Activated CD4-positive, alpha-beta T cell treated with anti-CD3 and anti-CD28 coated beads for 36 hours (primary cell): ENCODE measurements at regions of chr2 and their contacts with region 1.

Region 1: DNA sequence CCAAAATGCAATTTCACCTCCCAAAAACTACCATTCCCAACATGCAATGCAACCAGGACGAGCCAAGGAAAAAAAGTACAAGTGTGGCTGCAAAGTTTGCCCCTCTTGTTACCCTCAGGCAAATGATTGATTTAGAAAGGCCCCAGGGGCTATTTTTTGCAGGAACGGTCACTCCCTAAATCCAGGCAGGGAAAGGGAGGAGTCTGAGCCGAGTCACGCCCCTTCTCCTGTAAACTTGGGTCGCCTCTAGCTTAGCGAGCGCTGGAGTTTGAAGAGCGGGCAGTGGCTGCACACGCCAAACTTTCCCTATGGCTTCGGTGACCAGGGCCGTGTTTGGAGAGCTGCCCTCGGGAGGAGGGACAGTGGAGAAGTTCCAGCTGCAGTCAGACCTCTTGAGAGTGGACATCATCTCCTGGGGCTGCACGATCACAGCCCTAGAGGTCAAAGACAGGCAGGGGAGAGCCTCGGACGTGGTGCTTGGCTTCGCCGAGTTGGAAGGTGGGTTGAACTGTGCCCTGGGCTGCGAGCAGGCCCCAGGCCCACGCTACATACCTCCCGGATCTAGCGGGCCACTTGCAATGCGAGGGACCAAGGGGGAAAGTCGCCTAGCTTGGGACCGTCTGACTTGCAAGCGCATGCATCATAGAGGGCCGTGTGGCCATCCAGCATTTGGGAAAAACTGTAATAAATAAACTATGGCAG is at the start of gene GALM:
- DNase-seq: peak; percentile 77
- ATAC-seq: peak; percentile 32
- H3K4me3 Mint-ChIP-seq: peak within 1 kb of the TSS; percentile 89
- H3K27ac Mint-ChIP-seq: peak within 1 kb of the TSS; percentile 99
- H3K4me1 Mint-ChIP-seq: peaks cover 67% of the 10 kb centered on the region
- H3K27me3 Mint-ChIP-seq: no peaks in the 10 kb centered on the region
- total RNA-seq, gene GALM: 56.0 to 57.8 TPM

Region 2: DNA sequence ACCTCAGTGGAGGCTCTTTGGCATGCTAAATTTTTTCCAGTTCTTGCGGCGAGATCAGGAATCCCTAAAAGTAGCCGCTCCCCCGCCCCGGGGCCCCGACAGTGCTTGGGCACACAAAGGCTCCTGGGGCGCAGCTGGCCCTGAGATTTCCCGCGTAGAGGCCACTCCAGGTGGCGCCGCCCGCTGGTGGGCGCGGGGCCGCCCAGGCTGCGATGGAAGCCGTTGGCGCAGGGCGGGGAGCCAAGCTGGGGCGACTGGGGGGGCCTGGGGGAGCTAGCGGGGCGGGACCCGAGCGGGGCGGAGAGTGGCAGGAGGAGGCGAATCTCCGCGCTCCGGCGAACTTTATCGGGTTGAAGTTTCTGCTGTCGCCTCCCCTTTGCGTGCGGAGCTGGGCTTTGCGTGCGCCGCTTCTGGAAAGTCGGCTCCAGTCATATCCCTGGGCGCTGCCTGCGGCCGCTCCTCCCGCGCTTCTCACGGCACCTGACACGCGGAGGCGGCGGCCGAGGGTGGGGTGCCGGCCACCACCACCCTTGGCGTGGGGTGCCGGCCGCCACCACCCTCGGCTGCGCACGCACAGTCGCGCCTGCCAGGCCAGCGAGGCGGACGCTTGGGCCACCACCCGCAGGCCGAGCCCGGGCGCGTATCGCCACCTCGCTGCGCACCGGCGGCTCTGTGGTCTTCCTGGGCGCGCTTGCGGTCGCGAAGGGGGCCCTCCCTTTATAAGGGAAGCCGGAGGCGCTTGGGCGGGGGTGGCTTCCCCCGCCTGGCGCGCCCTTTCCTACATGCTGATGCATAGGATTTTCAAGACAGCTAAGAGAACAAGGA is 589.2 kb before region 1 on chr2:
- CTCF ChIA-PET with region 1: no interaction called
- POLR2A ChIA-PET with region 1: no interaction called
- intact Hi-C with region 1: no loop called
- DNase-seq: peak; percentile 90
- ATAC-seq: peak; percentile 75
- H3K4me3 Mint-ChIP-seq: peak overlapping the region; percentile 71
- H3K27ac Mint-ChIP-seq: peak overlapping the region; percentile 88
- H3K4me1 Mint-ChIP-seq: peaks cover 24% of the 10 kb centered on the region
- H3K27me3 Mint-ChIP-seq: peaks cover 64% of the 10 kb centered on the region

Region 3: GRCh38 chr2:38462109-38462759 is 203.8 kb before region 1 on chr2:
- CTCF ChIA-PET with region 1: no interaction called
- POLR2A ChIA-PET with region 1: no interaction called
- intact Hi-C with region 1: loop called in 1 of 2 experiments (anchors 1 kb)
- DNase-seq: peak; percentile 81
- ATAC-seq: peak; percentile 98
- H3K4me3 Mint-ChIP-seq: peak overlapping the region; percentile 11
- H3K27ac Mint-ChIP-seq: peak overlapping the region; percentile 49
- H3K4me1 Mint-ChIP-seq: peaks cover 10% of the 10 kb centered on the region
- H3K27me3 Mint-ChIP-seq: peaks cover 18% of the 10 kb centered on the region

Region 4: DNA sequence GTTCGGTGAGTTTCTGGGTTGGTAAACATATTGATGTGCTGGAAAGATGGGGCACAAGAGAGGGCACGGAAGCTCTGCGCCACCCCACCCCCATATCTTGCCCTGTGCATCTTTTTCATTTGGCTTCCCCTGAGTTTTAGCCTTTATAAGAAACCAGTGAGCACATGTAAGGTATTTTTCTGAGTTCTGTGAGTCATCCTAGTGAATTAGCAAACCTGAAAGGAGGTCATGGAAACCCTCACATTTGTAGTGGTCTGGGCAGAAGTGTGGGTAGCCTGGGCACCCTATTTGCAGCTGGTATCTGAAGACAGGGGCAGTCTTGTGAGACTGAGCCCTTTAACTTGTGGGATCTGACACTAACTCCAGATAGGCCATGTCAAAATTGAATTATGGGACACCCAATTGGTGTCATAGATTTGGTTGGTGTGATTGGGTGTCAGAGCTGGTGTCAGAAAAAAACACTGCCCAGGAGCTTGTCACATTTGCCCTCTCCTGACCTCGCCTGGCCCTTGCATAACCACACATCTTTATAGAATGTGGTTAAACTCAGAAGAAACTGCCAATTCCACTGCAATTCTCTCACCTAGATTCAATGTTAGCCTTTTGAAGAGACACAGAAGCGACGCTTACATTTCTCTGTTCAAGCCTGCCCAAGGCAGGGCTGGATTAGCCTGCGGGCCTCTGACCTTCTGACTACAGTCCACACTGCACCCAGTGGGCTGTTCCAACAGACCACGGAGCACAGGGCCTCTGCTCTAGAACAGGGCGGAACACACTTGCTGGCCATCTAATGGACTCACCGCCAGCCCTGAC is 12.1 kb before region 1 on chr2:
- CTCF ChIA-PET with region 1: interaction called, 29 read pairs
- POLR2A ChIA-PET with region 1: interaction called, 34 read pairs
- intact Hi-C with region 1: loop called (anchors 1 kb)
- DNase-seq: peak; percentile 87
- ATAC-seq: peak; percentile 81
- H3K4me3 Mint-ChIP-seq: peak overlapping the region; percentile 44
- H3K27ac Mint-ChIP-seq: peak overlapping the region; percentile 98
- H3K4me1 Mint-ChIP-seq: peaks cover 58% of the 10 kb centered on the region
- H3K27me3 Mint-ChIP-seq: no peaks in the 10 kb centered on the region

Region 5: DNA sequence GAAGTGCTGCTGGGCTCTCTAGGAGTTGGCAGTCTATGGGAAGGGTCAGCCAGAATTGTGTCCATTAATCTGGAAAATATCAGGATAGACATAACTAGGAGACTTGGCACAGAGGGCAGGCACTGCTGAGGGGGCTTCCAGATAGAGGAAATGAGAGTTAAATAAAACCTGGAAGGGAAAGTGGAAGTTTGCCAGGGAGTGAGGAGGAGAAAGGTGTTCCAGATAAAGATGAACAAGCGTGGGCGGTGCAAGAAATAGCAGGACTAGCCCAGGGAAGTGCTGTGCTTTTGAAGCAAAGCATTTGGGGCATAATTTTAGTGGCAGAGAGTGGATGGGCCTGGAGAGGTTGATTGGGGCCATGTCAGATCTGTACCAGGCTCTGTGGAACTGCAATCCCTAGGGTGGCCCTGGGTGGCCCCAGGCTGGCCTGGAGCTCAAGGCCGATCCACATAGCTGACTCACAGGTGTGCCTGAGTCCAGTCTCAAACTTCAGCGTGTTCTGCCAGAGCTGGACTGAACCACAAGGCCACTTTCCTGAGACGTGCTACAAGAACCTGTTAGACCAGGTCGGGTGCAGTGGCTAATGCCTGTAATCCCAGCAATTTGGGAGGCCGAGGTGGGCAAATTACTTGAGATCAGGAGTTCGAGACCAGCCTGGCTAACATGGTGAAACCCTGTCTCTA is 26.8 kb after region 1 on chr2:
- CTCF ChIA-PET with region 1: interaction called, 9 read pairs
- POLR2A ChIA-PET with region 1: interaction called, 10 read pairs
- intact Hi-C with region 1: no loop called
- DNase-seq: no peak
- ATAC-seq: no peak
- H3K4me3 Mint-ChIP-seq: no peak overlapping the region
- H3K27ac Mint-ChIP-seq: peak overlapping the region; percentile 71
- H3K4me1 Mint-ChIP-seq: peaks cover 67% of the 10 kb centered on the region
- H3K27me3 Mint-ChIP-seq: no peaks in the 10 kb centered on the region

Region 6: GRCh38 chr2:38720613-38721241 is 54.7 kb after region 1 on chr2:
- CTCF ChIA-PET with region 1: interaction called, 6 read pairs
- POLR2A ChIA-PET with region 1: interaction called, 4 read pairs
- intact Hi-C with region 1: loop called (anchors 1 to 2 kb)
- DNase-seq: no peak
- ATAC-seq: no peak
- H3K4me3 Mint-ChIP-seq: peak overlapping the region; percentile 27
- H3K27ac Mint-ChIP-seq: peak overlapping the region; percentile 78
- H3K4me1 Mint-ChIP-seq: peaks cover 75% of the 10 kb centered on the region
- H3K27me3 Mint-ChIP-seq: no peaks in the 10 kb centered on the region